ENCODE measurements at regions of chr5 and their contacts with region 1.

Region 1: GRCh38 chr5:151758430-151759241 is at the start of gene ATOX1:
- DNase-seq: peak; percentile 92
- ATAC-seq: peak; percentile 97
- H3K4me3 ChIP-seq: peak within 1 kb of the TSS; percentile 91
- H3K27ac ChIP-seq: peak within 1 kb of the TSS; percentile 42
- H3K4me1 ChIP-seq: peaks cover 24% of the 10 kb centered on the region
- H3K27me3 ChIP-seq: no peaks in the 10 kb centered on the region
- CTCF ChIP-seq: 0 out of 2 replicates have a peak, but pooled peaks have one; percentile 13
- total RNA-seq, gene ATOX1: 81.4 and 122 TPM in 2 replicates

Region 2: DNA sequence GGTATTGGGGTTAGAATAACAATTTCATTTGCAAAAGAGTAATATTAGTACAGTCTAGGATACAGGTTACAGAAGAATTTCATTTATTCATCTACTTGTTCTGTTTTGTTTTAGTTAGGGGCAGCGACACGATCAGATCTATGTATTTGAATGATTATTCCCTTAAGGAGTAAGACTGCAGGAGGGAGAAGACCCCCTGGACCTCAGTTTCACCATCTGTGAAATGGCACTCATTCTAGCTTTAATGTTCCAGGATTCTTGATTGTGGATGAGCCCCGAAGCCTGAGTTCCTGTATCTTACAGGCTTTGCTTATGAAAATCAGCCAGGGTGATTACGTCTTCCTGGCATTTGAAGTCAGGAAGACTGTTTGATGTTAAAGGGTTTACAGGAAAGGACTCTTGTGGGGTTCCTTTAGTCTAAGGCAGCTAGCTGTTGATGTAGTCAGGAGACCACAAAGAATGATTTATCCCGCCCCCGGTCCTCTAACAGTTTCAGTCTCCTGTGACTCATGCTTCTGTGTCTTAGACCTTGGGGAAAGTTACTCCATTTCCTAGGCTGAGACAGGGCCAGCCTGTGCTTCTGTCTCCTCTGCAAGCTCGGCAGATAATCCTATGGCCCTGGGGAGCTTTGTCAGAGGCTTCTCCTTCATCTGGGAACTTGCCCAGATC is 968.6 kb before region 1 on chr5:
- CTCF ChIA-PET with region 1: interaction called, 11 read pairs
- POLR2A ChIA-PET with region 1: no interaction called
- intact Hi-C with region 1: no loop called
- DNase-seq: peak; percentile 90
- ATAC-seq: peak; percentile 99
- H3K4me3 ChIP-seq: peak overlapping the region; percentile 21
- H3K27ac ChIP-seq: peak overlapping the region; percentile 81
- H3K4me1 ChIP-seq: peaks cover 23% of the 10 kb centered on the region
- H3K27me3 ChIP-seq: no peaks in the 10 kb centered on the region
- CTCF ChIP-seq: no peak

Region 3: DNA sequence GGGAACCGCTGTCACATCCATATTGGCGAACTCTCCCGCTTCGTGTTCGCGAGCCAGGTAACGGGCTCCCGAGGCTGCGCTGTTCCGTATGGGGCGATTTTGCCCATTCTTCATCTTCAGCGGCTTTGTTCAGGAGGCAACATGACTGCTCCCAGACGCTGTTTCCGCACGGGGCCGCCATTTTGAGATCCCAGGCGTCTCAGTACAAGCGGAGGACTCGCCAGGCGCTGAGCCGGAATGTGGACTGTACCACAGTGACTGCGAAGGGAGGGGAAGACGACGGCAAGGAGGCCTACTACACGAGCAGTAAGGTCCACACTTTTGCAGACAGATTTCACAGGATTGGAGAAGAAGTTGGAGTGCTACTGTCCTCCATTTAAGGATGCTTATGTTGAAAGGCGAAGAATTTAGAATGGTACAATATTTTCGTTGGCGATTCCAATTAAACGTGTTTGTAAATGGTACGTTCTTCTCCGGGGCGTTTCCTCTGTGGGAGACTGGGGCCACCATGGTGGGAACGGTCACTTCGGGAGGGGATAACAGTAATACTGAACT is 812.2 kb before region 1 on chr5:
- CTCF ChIA-PET with region 1: no interaction called
- POLR2A ChIA-PET with region 1: no interaction called
- intact Hi-C with region 1: no loop called
- DNase-seq: no peak
- ATAC-seq: no peak
- H3K4me3 ChIP-seq: no peak overlapping the region
- H3K27ac ChIP-seq: no peak overlapping the region
- H3K4me1 ChIP-seq: no peaks in the 10 kb centered on the region
- H3K27me3 ChIP-seq: no peaks in the 10 kb centered on the region
- CTCF ChIP-seq: no peak